WTC11 (cell line): ENCODE measurements at regions of chr6 and their contacts with region 1.

Region 1: DNA sequence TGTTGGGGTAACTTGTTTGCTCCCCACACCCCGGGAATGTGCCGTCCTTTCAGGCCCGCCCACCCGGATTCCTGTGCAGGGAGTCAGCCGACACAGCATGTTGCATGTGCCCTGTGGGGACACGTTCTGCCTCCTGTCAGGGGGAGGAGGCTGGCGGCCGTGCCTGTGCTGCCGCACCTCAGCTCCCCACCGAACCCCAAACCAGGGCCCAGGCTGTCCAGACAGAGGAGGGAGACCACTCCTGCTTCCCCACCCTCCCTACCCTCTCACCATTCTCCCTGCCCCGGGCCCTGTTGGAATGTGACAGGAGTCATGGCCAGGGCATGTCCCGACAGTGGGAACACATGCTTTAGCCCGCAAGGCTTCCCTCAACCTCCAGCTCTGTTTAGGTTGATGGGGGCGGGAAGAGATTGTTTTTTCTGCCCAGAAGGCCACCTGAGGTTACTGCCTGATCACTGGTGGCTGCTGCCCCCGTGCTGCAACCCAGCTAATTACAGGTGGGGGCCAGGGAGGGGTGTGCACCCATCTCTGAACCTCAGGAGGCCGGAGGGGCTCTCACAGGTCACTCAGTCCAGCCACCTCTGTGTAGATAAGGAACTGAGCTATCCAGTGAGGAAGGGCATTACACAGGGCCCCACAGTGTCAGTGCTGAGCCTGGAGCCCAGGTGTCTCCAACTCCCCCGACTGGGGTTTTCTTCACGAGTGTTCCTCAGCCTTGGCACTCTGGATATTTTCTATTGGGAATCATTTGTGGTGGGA is 13.6 kb downstream of the LRRC73 start:
- DNase-seq: peak; percentile 70
- ATAC-seq: peak; percentile 73
- H3K4me3 Mint-ChIP-seq: no peak overlapping the region
- H3K27ac Mint-ChIP-seq: peak overlapping the region; percentile 86; the same call in 1 of the 2 replicates
- H3K4me1 Mint-ChIP-seq: peaks cover 32% of the 10 kb centered on the region
- H3K27me3 Mint-ChIP-seq: no peaks in the 10 kb centered on the region
- CTCF ChIP-seq: peak; percentile 39; the same call in 1 of the 2 replicates

Region 2: DNA sequence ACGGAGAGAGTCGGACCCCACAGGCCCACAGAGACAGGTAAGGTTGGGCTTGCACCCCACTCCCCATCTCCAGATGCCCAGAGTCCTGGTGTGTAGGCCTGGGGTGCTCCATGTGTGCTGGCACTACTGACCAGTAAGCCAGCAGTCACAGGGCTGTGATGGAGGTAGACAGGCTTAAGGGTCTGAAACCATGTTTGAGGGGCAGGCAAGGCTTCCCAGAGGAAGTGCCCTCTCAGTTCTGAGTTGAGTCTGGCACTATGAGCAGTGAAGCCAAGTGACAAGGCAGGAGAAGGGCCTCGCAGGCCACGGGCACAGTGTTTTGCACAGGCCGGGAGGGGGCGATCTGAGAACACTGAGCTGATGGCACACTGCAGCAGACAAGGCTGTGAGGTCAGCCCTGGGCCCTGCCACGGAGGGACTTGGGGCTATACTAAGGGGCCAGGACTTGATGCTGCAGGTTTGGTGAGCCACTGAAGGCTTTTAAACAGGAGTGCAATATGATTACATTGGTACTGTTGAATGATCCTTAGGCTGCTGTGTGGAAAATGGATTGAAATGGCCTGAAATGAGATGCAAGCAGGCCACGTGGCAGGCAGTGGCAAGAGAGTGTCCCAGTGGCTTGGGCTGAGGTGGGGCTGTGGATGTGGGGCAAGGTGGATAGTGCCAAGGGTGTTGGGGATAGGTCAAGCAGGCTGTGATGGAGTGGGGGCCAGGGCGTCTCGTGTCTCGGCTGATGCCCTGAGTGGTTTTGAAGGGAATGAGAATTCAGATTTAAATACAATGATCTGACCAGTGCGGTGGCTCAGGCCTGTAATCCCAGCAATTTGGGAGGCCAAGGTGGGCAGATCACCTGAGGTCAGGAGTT is 233.0 kb before region 1 on chr6:
- CTCF ChIA-PET with region 1: interaction called, 11 read pairs
- POLR2A ChIA-PET with region 1: no interaction called
- DNase-seq: peak; percentile 90
- ATAC-seq: peak; percentile 87
- H3K4me3 Mint-ChIP-seq: no peak overlapping the region
- H3K27ac Mint-ChIP-seq: peak overlapping the region; percentile 28; the same call in 1 of the 2 replicates
- H3K4me1 Mint-ChIP-seq: peaks cover 24% of the 10 kb centered on the region
- H3K27me3 Mint-ChIP-seq: peaks cover 14% of the 10 kb centered on the region
- CTCF ChIP-seq: peak; percentile 60; the same call in 1 of the 2 replicates

Region 3: DNA sequence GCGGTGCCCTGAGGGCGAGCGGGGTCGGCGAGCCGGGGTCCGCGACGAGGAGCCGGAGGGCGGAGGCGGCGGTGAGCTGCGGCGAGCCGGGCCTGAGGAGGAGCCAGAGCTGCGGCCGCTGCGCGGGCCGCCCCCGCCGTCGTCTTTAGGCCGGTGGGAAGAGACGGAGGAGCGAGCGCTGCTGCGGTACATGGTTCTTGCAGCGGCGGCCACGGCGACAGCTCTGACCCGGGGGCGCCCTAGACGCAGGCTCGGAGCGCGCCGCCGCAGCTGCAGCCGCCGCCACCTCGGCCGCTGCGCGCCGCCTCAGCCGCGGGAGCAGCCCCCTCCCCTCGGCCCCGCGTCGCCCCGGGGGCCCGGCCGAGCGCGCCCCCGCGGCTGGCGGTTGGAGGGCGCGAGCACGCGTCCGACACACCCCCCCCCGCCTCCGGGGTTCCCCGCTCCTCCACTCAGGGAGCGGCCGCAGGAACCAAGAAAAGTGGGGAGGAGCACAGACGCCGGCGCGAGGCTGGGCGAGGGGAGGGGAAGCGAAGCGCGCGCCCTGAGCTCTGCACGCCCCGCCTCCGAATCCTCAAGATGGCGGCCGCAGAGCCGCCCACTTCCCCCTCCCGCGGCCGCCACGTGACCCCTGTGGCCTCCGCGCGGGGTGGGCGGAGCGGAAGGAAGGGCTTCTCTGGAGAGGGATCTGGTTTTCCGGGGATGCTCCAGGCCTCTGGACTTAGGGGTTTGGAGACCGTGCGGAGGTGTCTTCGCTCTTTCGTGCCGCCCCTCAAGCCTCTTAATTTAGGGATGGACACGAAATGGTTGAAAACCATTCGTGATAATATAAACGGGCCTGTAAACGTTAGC is 127.2 kb before region 1 on chr6 and contains the start of gene ZNF318:
- CTCF ChIA-PET with region 1: interaction called, 10 read pairs
- POLR2A ChIA-PET with region 1: no interaction called
- DNase-seq: peak; percentile 95
- ATAC-seq: peak; percentile 97
- H3K4me3 Mint-ChIP-seq: peak within 1 kb of the TSS; percentile 80
- H3K27ac Mint-ChIP-seq: peak within 1 kb of the TSS; percentile 82; the same call in 1 of the 2 replicates
- H3K4me1 Mint-ChIP-seq: peaks cover 23% of the 10 kb centered on the region
- H3K27me3 Mint-ChIP-seq: peaks cover 22% of the 10 kb centered on the region
- CTCF ChIP-seq: no peak
- total RNA-seq, gene ZNF318: 19.0 to 24.3 TPM (median 19.7 TPM) in 3 replicates

Region 4: GRCh38 chr6:43454696-43455530 is 41.6 kb before region 1 on chr6:
- CTCF ChIA-PET with region 1: interaction called, 65 read pairs
- POLR2A ChIA-PET with region 1: interaction called, 3 read pairs
- DNase-seq: peak; percentile 94
- ATAC-seq: peak; percentile 32
- H3K4me3 Mint-ChIP-seq: peak overlapping the region; percentile 65
- H3K27ac Mint-ChIP-seq: no peak overlapping the region
- H3K4me1 Mint-ChIP-seq: peaks cover 16% of the 10 kb centered on the region
- H3K27me3 Mint-ChIP-seq: peaks cover 43% of the 10 kb centered on the region
- CTCF ChIP-seq: no peak

Region 5: DNA sequence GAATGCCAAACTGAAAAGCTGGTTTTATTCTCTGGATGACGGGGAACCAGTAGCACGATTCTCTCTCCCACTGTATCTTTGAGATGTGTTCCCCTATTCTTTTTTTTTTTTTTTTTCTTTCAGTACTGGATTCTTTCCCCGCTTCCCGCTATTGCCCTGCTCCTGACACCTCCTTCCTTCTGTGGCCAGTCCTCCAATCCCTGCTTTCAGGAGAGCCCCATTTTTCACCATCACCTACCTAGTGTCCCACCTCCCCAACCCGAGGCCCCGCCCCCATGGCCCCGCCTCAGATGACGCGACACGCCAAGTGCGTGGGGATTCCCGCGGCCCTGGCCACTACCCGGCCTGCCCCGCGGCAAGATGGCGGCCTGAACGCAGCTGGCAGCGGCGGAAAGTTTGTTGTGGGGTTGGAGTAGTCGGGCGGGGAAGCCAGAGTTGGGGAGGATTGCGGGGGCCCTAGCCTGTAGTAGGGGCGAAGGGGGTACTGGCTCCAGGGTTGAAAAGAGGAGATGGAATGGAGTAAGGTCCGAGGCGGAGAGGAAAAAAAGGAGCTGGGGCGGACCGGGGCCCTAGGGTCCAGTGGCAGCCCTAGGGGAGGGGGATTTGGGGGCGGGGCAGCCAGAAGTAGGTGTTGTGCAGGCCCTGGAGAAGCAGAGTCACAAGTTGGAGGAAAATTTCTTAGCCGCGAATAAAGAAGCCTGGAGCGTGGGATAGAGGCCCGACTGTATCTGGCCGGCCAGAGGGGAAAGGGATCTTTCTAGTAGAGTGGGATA is 19.1 kb before region 1 on chr6 and contains the start of gene TJAP1:
- CTCF ChIA-PET with region 1: interaction called, 15 read pairs
- POLR2A ChIA-PET with region 1: interaction called, 4 read pairs
- DNase-seq: peak; percentile 98
- ATAC-seq: peak; percentile 97
- H3K4me3 Mint-ChIP-seq: peak within 1 kb of the TSS; percentile 76
- H3K27ac Mint-ChIP-seq: peak within 1 kb of the TSS; percentile 82
- H3K4me1 Mint-ChIP-seq: peaks cover 45% of the 10 kb centered on the region
- H3K27me3 Mint-ChIP-seq: no peaks in the 10 kb centered on the region
- CTCF ChIP-seq: no peak
- total RNA-seq, gene TJAP1: 40.2 to 40.8 TPM (median 40.4 TPM) in 3 replicates

Region 6: GRCh38 chr6:43506667-43507471 is 10.3 kb after region 1 on chr6:
- CTCF ChIA-PET with region 1: interaction called, 75 read pairs
- POLR2A ChIA-PET with region 1: interaction called, 5 read pairs
- DNase-seq: peak; percentile 81
- ATAC-seq: peak; percentile 63
- H3K4me3 Mint-ChIP-seq: no peak overlapping the region
- H3K27ac Mint-ChIP-seq: no peak overlapping the region
- H3K4me1 Mint-ChIP-seq: peaks cover 17% of the 10 kb centered on the region
- H3K27me3 Mint-ChIP-seq: peaks cover 28% of the 10 kb centered on the region
- CTCF ChIP-seq: peak; percentile 97